CD4-positive, alpha-beta memory T cell (primary cell): ENCODE measurements at regions of chr6 and their contacts with region 1.

Region 1: DNA sequence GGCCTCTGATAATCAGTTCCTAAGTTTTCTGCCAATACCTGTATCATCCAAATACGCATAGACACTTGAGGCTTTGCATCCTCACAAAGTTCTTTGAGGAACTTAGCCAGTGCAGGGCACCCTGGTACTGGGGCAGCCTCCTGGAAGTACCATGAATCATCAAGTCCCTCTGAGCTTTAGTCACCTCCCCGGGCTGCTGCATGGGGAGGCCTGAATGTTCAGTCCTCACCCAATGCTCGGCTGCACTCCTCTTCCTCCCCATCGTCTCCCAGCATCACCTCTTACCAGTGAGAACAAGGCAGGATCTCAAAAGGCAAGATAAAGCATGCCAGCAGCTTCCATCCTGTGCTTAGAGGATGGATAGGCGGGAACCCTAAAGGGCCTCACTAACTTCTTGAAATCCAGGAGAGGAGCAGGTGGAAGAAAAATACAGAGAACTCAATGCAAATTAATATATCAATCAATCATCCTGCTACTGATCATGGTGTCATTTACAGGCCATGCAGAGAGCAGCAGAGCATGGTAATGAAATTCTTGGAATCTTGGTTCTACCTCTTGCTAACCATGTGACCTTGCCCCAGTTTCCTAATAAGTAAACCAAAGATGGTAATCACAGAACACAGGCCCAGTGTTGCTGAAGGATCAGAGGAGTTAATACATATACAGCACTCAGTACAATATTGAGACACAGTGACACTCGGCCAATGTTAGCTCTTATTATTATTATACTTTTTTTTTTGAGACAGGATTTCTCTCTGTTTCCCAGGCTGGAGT is 4.7 kb upstream of the CCN6 start:
- DNase-seq: no peak
- H3K4me3 ChIP-seq: no peak overlapping the region
- H3K4me3 Mint-ChIP-seq: no peak overlapping the region
- H3K27ac ChIP-seq: no peak overlapping the region
- H3K27ac Mint-ChIP-seq: no peak overlapping the region
- H3K4me1 ChIP-seq: no peaks in the 10 kb centered on the region
- H3K4me1 Mint-ChIP-seq: peaks cover 0 to 2% (median 0%) of the 10 kb centered on the region in 4 donors
- H3K27me3 ChIP-seq: no peaks in the 10 kb centered on the region
- H3K27me3 Mint-ChIP-seq: peaks cover 0 to 1% of the 10 kb centered on the region in 2 donors

Region 2: DNA sequence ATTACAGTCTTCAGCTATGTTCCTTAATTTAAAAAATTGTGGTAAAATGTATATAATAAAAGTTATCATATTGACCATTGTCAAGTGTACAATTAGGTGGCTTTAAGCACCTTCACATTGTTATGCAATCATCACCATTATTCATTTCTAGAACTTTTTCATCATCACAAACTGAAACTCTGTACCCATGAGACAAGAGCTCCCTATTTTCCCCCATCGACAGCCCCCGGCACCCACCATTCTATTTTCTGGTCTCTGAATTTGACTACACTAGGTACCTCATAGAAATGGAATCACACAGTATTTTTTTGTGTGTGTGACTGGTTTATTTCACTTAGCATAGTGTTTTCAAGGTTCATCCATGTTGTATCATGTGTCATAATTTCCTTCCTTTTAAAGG is 136.3 kb before region 1 on chr6:
- CTCF ChIA-PET with region 1: no interaction called
- POLR2A ChIA-PET with region 1: no interaction called
- intact Hi-C with region 1: no loop called
- DNase-seq: no peak
- H3K4me3 ChIP-seq: no peak overlapping the region
- H3K4me3 Mint-ChIP-seq: no peak overlapping the region
- H3K27ac ChIP-seq: no peak overlapping the region
- H3K27ac Mint-ChIP-seq: no peak overlapping the region
- H3K4me1 ChIP-seq: no peaks in the 10 kb centered on the region
- H3K4me1 Mint-ChIP-seq: peaks cover 0 to 6% (median 3%) of the 10 kb centered on the region in 4 donors
- H3K27me3 ChIP-seq: no peaks in the 10 kb centered on the region
- H3K27me3 Mint-ChIP-seq: no peaks in the 10 kb centered on the region

Region 3: DNA sequence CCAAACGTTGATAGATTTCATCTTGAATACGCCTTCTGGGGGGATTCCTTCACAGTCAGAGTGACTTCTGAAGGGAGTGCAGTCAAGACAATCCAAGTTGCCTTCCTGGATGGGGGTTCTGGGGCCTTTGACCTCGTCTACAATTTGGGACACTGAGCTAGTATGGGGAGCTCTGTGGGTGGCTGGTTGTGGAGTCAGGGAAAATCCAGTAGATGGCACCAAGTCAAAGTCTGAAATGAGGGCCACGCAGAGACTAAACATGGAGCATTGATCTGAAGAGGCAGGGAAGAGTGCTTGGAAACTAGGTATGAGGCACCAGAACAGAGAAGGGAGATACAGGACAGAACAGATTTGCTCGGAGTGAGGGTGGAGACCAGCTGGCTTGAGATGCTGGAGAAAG is 38.9 kb before region 1 on chr6:
- CTCF ChIA-PET with region 1: interaction called, 619 read pairs
- POLR2A ChIA-PET with region 1: interaction called, 42 read pairs
- intact Hi-C with region 1: no loop called
- DNase-seq: peak in 4 of 5 donors; percentile 33 to 44 (median 38)
- H3K4me3 ChIP-seq: no peak overlapping the region
- H3K4me3 Mint-ChIP-seq: no peak overlapping the region
- H3K27ac ChIP-seq: no peak overlapping the region
- H3K27ac Mint-ChIP-seq: peak overlapping the region in 3 of 7 donors; percentile 0 to 77 (median 8)
- H3K4me1 ChIP-seq: peaks cover 4% of the 10 kb centered on the region
- H3K4me1 Mint-ChIP-seq: peaks cover 2 to 15% (median 5%) of the 10 kb centered on the region in 4 donors
- H3K27me3 ChIP-seq: no peaks in the 10 kb centered on the region
- H3K27me3 Mint-ChIP-seq: no peaks in the 10 kb centered on the region

Region 4: GRCh38 chr6:112372226-112372806 is 323.1 kb after region 1 on chr6:
- CTCF ChIA-PET with region 1: no interaction called
- POLR2A ChIA-PET with region 1: no interaction called
- intact Hi-C with region 1: no loop called
- DNase-seq: no peak
- H3K4me3 ChIP-seq: no peak overlapping the region
- H3K4me3 Mint-ChIP-seq: no peak overlapping the region
- H3K27ac ChIP-seq: no peak overlapping the region
- H3K27ac Mint-ChIP-seq: no peak overlapping the region
- H3K4me1 ChIP-seq: no peaks in the 10 kb centered on the region
- H3K4me1 Mint-ChIP-seq: no peaks in the 10 kb centered on the region
- H3K27me3 ChIP-seq: no peaks in the 10 kb centered on the region
- H3K27me3 Mint-ChIP-seq: peaks cover 8 to 13% of the 10 kb centered on the region in 2 donors